A549 (cell line): ENCODE measurements at regions of chr17 and their contacts with region 1.

Region 1: GRCh38 chr17:78674595-78675315 is 97.6 kb upstream of the DNAH17 start:
- DNase-seq: no peak
- ATAC-seq: peak in 1 of 2 experiments; percentile 44; a peak in 3 of 6 replicates
- H3K4me3 ChIP-seq: no peak overlapping the region
- H3K27ac ChIP-seq: peak overlapping the region in 1 of 2 experiments; percentile 65; a peak in 3 of 6 replicates
- H3K4me1 ChIP-seq: peaks cover 48% of the 10 kb centered on the region
- CTCF ChIP-seq: no peak
- EP300 ChIP-seq: no peak
- POLR2A ChIP-seq: no peak
- RAD21 ChIP-seq: no peak

Region 2: GRCh38 chr17:78689029-78689428 is 14.3 kb after region 1 on chr17:
- CTCF ChIA-PET with region 1: interaction called, 11 read pairs
- POLR2A ChIA-PET with region 1: no interaction called
- DNase-seq: no peak
- ATAC-seq: peak in 1 of 2 experiments; percentile 47; a peak in 2 of 6 replicates
- H3K4me3 ChIP-seq: no peak overlapping the region
- H3K27ac ChIP-seq: no peak overlapping the region
- H3K4me1 ChIP-seq: no peaks in the 10 kb centered on the region
- CTCF ChIP-seq: no peak
- EP300 ChIP-seq: no peak
- POLR2A ChIP-seq: no peak
- RAD21 ChIP-seq: no peak

Region 3: GRCh38 chr17:78745407-78746088 is 70.8 kb after region 1 on chr17:
- CTCF ChIA-PET with region 1: no interaction called
- POLR2A ChIA-PET with region 1: no interaction called
- DNase-seq: peak in 1 of 2 experiments; percentile 55
- ATAC-seq: peak; percentile 41 to 57; a peak in 3 of 6 replicates
- H3K4me3 ChIP-seq: no peak overlapping the region
- H3K27ac ChIP-seq: peak overlapping the region in 1 of 2 experiments; percentile 50; a peak in 2 of 6 replicates
- H3K4me1 ChIP-seq: peaks cover 23% of the 10 kb centered on the region; the same call in 2 of the 3 replicates
- CTCF ChIP-seq: peak; percentile 92
- EP300 ChIP-seq: no peak
- POLR2A ChIP-seq: no peak
- RAD21 ChIP-seq: peak; percentile 63 to 72